T-cell (primary cell): ENCODE measurements at regions of chr16 and their contacts with region 1.

Region 1: GRCh38 chr16:57591086-57591869 is 37.2 kb upstream of the ADGRG1 start:
- DNase-seq: peak in 31 of 35 experiments; percentile 28 to 78 (median 48)
- ATAC-seq: peak; percentile 31 to 50 (median 32)
- H3K4me3 ChIP-seq: no peak overlapping the region
- H3K4me3 Mint-ChIP-seq: peak overlapping the region in 2 of 3 donors; percentile 60 to 72
- H3K27ac ChIP-seq: peak overlapping the region; percentile 73
- H3K27ac Mint-ChIP-seq: peak overlapping the region; percentile 91 to 95
- H3K4me1 ChIP-seq: peaks cover 17 to 63% of the 10 kb centered on the region in 2 experiments
- H3K4me1 Mint-ChIP-seq: peaks cover 27 to 51% (median 36%) of the 10 kb centered on the region in 3 donors
- H3K27me3 ChIP-seq: no peaks in the 10 kb centered on the region
- H3K27me3 Mint-ChIP-seq: no peaks in the 10 kb centered on the region

Region 2: GRCh38 chr16:57470683-57471082 is 120.6 kb before region 1 on chr16:
- CTCF ChIA-PET with region 1: no interaction called
- POLR2A ChIA-PET with region 1: no interaction called
- DNase-seq: no peak
- ATAC-seq: no peak
- H3K4me3 ChIP-seq: no peak overlapping the region
- H3K4me3 Mint-ChIP-seq: no peak overlapping the region
- H3K27ac ChIP-seq: no peak overlapping the region
- H3K27ac Mint-ChIP-seq: no peak overlapping the region
- H3K4me1 ChIP-seq: peaks cover 2 to 9% of the 10 kb centered on the region in 2 experiments
- H3K4me1 Mint-ChIP-seq: peaks cover 4 to 27% (median 11%) of the 10 kb centered on the region in 3 donors
- H3K27me3 ChIP-seq: no peaks in the 10 kb centered on the region
- H3K27me3 Mint-ChIP-seq: no peaks in the 10 kb centered on the region

Region 3: GRCh38 chr16:57576429-57576870 is 14.8 kb before region 1 on chr16:
- CTCF ChIA-PET with region 1: interaction called, 12 to 13 read pairs
- POLR2A ChIA-PET with region 1: interaction called in 1 of 2 experiments, 12 read pairs
- DNase-seq: peak; percentile 49 to 91 (median 76)
- ATAC-seq: peak; percentile 74 to 87 (median 80)
- H3K4me3 ChIP-seq: no peak overlapping the region
- H3K4me3 Mint-ChIP-seq: no peak overlapping the region
- H3K27ac ChIP-seq: peak overlapping the region; percentile 63
- H3K27ac Mint-ChIP-seq: peak overlapping the region; percentile 52 to 83
- H3K4me1 ChIP-seq: peaks cover 9 to 52% of the 10 kb centered on the region in 2 experiments
- H3K4me1 Mint-ChIP-seq: peaks cover 28 to 44% (median 30%) of the 10 kb centered on the region in 3 donors
- H3K27me3 ChIP-seq: no peaks in the 10 kb centered on the region
- H3K27me3 Mint-ChIP-seq: peaks cover 0 to 8% of the 10 kb centered on the region in 2 donors